Transverse colon (tissue), 4 donors: ENCODE measurements at regions of chr3 and their contacts with region 1.

Region 1: GRCh38 chr3:102790747-102791325 is 356.0 kb downstream of the ZPLD1 start:
- DNase-seq: no peak
- H3K4me3 ChIP-seq: no peak overlapping the region
- H3K27ac ChIP-seq: no peak overlapping the region
- H3K4me1 ChIP-seq: no peaks in the 10 kb centered on the region
- H3K27me3 ChIP-seq: no peaks in the 10 kb centered on the region
- CTCF ChIP-seq: no peak
- EP300 ChIP-seq: no peak
- POLR2A ChIP-seq: no peak

Region 2: GRCh38 chr3:102761766-102762165 is 29.1 kb before region 1 on chr3:
- in situ Hi-C with region 1: no loop called
- intact Hi-C with region 1: loop called (anchors 1 kb)
- DNase-seq: no peak
- H3K4me3 ChIP-seq: no peak overlapping the region
- H3K27ac ChIP-seq: no peak overlapping the region
- H3K4me1 ChIP-seq: no peaks in the 10 kb centered on the region
- H3K27me3 ChIP-seq: no peaks in the 10 kb centered on the region
- CTCF ChIP-seq: no peak
- EP300 ChIP-seq: no peak
- POLR2A ChIP-seq: no peak

Region 3: GRCh38 chr3:103372031-103372430 is 581.2 kb after region 1 on chr3:
- in situ Hi-C with region 1: no loop called
- intact Hi-C with region 1: no loop called
- DNase-seq: no peak
- H3K4me3 ChIP-seq: no peak overlapping the region
- H3K27ac ChIP-seq: no peak overlapping the region
- H3K4me1 ChIP-seq: no peaks in the 10 kb centered on the region
- H3K27me3 ChIP-seq: no peaks in the 10 kb centered on the region
- CTCF ChIP-seq: no peak
- EP300 ChIP-seq: no peak
- POLR2A ChIP-seq: no peak